ENCODE measurements at regions of chr15 and their contacts with region 1.

Region 1: GRCh38 chr15:82999905-83000671 is 11.4 kb downstream of the C15orf40 start:
- DNase-seq: no peak
- H3K4me3 ChIP-seq: peak overlapping the region in 3 of 4 donors; percentile 21 to 43 (median 33)
- H3K27ac ChIP-seq: peak overlapping the region in 2 of 4 donors; percentile 18 to 34
- H3K4me1 ChIP-seq: peaks cover 5 to 12% (median 9%) of the 10 kb centered on the region in 4 donors
- H3K27me3 ChIP-seq: no peaks in the 10 kb centered on the region
- CTCF ChIP-seq: peak; percentile 35 to 40 (median 38)
- EP300 ChIP-seq: no peak
- POLR2A ChIP-seq: no peak

Region 2: GRCh38 chr15:82849556-82850512 is 150.3 kb before region 1 on chr15:
- intact Hi-C with region 1: loop called (anchors 5 kb)
- DNase-seq: peak; percentile 92
- H3K4me3 ChIP-seq: peak overlapping the region; percentile 2 to 30 (median 19)
- H3K27ac ChIP-seq: peak overlapping the region in 3 of 4 donors; percentile 32 to 51 (median 48)
- H3K4me1 ChIP-seq: peaks cover 6 to 15% (median 13%) of the 10 kb centered on the region in 4 donors
- H3K27me3 ChIP-seq: no peaks in the 10 kb centered on the region
- CTCF ChIP-seq: peak; percentile 54 to 69 (median 67)
- EP300 ChIP-seq: no peak
- POLR2A ChIP-seq: no peak

Region 3: DNA sequence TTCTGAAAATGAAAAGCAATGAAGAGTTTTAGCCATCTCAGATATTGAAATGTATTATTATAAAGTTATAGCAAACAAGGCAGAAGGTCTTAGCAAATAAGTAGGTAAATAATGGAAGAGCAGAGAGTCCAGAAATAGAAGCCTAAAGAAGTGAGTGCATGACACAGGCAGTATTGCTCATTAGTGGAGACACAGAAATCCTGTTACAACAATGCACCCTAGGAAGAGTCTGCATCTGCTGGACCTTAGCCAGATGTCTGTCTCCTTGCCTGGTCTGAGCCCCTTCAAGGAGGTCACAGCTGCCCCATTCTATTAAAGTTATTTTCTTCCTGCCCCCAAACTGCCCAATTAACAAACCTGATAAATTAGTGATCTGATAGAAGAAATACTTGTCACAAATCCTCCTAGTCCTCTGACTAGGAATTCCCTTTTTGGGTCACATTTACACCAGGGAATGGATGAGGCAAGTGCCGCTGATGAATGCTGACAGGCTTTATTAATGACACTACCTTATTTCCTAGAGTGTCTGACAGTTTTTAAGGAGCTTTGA is 99.5 kb before region 1 on chr15:
- intact Hi-C with region 1: no loop called
- DNase-seq: no peak
- H3K4me3 ChIP-seq: no peak overlapping the region
- H3K27ac ChIP-seq: no peak overlapping the region
- H3K4me1 ChIP-seq: peaks cover 0 to 9% (median 0%) of the 10 kb centered on the region in 4 donors
- H3K27me3 ChIP-seq: no peaks in the 10 kb centered on the region
- CTCF ChIP-seq: no peak
- EP300 ChIP-seq: no peak
- POLR2A ChIP-seq: no peak

Region 4: GRCh38 chr15:83077491-83078230 is 77.6 kb after region 1 on chr15:
- intact Hi-C with region 1: no loop called
- DNase-seq: no peak
- H3K4me3 ChIP-seq: no peak overlapping the region
- H3K27ac ChIP-seq: no peak overlapping the region
- H3K4me1 ChIP-seq: no peaks in the 10 kb centered on the region
- H3K27me3 ChIP-seq: peaks cover 0 to 22% (median 0%) of the 10 kb centered on the region in 4 donors
- CTCF ChIP-seq: no peak
- EP300 ChIP-seq: no peak
- POLR2A ChIP-seq: no peak